Activated CD4-positive, alpha-beta memory T cell treated with anti-CD3 and anti-CD28 coated beads, Interleukin-2, amount 10 ng/mL, durations not matched to agents 7 days and 5 days (primary cell): ENCODE measurements at regions of chr20 and their contacts with region 1.

Region 1: DNA sequence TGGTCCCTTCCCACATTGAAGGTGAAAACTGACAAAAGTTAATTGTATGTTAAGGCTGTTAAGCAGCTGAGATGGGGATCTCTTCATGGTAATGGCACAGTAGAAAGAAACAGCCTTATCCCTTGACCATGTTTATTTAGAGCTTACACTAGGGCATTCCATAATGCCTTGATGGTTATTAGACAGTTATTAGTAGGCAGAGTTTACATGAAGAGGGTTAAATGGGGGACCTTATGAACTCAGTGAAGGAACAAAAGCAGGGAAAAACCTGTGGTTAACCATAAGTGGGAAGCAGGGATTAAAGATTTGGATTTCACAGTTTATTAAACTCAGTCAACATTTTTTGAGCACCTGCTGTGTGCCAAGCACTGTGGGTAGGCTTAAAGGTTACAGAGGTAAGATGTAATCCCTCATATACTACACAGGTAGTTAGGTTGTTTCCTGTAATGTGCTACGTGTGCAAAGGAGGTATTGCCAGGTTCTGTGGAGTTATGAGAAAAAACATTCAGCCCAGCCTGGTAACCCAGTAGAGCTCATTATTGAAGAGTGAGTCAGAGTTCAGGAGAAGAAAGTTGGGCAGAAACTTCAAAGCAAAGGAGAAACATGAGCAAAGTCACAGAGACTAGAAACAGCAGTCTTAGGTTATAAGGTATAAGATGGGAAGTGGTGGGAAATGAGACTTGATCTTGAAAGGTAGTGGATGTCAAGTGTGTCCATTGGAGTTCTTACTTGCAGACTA is 32.3 kb upstream of the GNRH2 start:
- DNase-seq: no peak
- H3K4me3 Mint-ChIP-seq: no peak overlapping the region
- H3K27ac Mint-ChIP-seq: peak overlapping the region; percentile 71
- H3K4me1 Mint-ChIP-seq: peaks cover 59% of the 10 kb centered on the region
- H3K27me3 Mint-ChIP-seq: no peaks in the 10 kb centered on the region

Region 2: DNA sequence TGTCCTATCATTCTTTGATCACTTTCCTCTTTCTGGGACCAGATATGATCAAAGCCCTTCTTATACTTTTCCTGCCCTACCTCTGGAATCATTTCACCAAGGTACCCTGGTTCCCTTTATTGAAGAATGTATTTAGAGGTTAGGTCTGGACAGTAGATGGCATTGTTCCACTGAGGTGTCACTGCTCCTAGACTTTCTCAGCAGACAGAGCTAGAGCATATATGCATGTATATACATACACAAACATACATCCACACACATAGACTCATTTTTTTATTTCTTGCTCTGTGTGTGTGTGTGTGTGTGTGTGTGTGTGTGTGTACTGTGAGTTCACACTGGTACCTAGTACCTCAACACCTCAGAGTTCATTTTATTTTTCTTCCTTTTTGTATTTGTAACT is 97.0 kb before region 1 on chr20:
- CTCF ChIA-PET with region 1: interaction called, 11 read pairs
- POLR2A ChIA-PET with region 1: no interaction called
- DNase-seq: no peak
- H3K4me3 Mint-ChIP-seq: no peak overlapping the region
- H3K27ac Mint-ChIP-seq: no peak overlapping the region
- H3K4me1 Mint-ChIP-seq: peaks cover 3% of the 10 kb centered on the region
- H3K27me3 Mint-ChIP-seq: no peaks in the 10 kb centered on the region

Region 3: DNA sequence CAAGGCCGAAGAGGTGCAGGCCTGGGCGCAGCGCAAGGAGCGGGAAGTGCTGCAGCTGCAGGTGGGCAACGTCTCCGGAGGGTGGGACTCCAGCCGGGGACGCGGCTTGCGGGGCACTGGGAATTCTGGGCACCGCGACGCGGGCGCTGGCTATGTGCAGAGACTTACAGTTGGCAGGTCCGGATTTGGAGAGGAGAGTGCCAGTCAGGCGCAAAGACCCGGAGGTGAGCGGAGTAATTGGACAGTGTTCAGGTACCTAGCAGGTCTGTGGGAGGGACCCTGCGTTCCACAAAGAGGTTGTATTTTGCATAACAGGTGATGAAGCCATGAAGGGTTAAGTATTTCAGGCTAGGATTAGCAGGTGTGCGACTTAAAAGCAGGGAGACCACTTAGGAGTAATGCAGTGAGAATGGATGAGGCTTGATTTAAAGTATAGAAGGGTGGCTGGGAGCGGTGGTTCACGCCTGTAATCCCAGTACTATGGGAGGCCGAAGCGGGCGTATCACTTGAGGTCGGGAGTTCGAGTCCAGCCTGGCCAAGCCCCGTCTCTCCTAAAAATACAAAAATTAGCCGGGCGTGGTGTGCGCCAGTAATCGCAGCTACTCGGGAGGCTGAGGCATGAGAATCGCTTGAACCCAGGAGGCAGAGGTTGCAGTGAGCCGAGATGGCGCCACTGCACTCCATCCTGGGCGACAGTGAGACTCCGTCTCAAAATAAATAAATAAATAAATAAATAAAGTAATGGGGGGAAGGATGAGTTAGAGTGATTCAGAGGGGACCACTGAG is 35.7 kb after region 1 on chr20:
- CTCF ChIA-PET with region 1: no interaction called
- POLR2A ChIA-PET with region 1: no interaction called
- DNase-seq: no peak
- H3K4me3 Mint-ChIP-seq: peak overlapping the region; percentile 74
- H3K27ac Mint-ChIP-seq: peak overlapping the region; percentile 13
- H3K4me1 Mint-ChIP-seq: peaks cover 26% of the 10 kb centered on the region
- H3K27me3 Mint-ChIP-seq: no peaks in the 10 kb centered on the region